B cell (primary cell): ENCODE measurements at regions of chr3 and their contacts with region 1.

Region 1: DNA sequence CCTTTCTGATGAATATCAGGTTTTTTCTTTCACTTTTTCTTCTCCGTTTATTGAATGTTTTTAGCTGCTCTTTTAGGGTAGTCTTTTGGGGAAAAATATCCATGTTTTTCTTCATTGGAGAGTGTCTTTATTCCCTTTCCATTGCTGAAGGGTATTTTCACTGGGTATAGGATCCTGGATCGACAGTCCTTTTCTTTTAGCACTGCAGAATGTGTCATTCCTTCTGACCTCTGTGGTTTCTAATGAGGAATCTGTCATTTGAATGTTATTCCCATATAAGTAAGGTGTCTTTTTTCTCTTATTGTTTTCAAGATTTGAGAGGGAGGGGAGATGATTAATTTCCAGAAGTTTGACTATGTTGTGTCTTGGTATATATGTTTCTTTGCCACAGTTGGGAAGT is 96.8 kb downstream of the BBX start:
- DNase-seq: no peak
- ATAC-seq: no peak
- H3K4me3 ChIP-seq: no peak overlapping the region
- H3K4me3 Mint-ChIP-seq: peak overlapping the region; percentile 15
- H3K27ac ChIP-seq: no peak overlapping the region
- H3K27ac Mint-ChIP-seq: no peak overlapping the region
- H3K4me1 ChIP-seq: peaks cover 0 to 30% of the 10 kb centered on the region in 2 donors
- H3K4me1 Mint-ChIP-seq: peaks cover 71% of the 10 kb centered on the region
- H3K27me3 ChIP-seq: no peaks in the 10 kb centered on the region
- H3K27me3 Mint-ChIP-seq: no peaks in the 10 kb centered on the region
- CTCF ChIP-seq: no peak

Region 2: DNA sequence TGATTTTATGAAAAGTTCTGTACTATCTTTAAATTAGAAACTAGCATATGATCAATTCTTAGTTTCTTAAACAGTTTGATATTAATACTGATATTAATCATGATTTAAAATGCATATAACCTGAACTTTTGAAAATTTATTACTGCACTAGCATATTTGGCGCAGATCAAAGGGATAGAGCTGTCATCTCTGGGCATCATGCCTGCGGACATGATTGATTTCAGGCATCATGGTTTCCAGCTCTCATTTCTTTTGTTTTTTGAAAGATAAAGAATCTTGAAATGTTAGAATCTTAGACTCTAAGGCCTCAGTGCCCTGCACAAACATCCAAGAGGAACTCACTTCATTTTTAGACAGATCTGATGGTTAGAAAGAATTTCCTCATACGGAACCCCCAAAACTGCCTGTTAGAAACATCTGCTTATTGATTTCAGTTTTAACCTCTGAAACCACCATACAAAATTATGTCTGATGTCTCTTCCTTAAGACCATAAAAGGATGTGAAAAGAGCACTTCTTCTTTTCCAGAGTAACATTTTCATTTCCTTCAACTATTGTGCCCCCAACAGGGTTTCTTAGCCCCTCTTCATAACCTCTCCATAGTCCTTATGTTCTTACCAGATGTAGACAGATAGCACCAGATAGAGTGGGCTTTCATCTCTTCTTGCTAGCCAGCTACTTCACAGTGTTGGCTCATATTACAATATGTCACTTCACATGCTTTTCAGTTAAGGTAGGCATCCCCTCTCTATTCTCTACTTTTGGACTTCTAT is 14.0 kb after region 1 on chr3:
- CTCF ChIA-PET with region 1: interaction called, 3 read pairs
- POLR2A ChIA-PET with region 1: no interaction called
- intact Hi-C with region 1: loop called (anchors 2 kb)
- DNase-seq: peak; percentile 47
- ATAC-seq: peak; percentile 33
- H3K4me3 ChIP-seq: peak overlapping the region in 1 of 5 experiments; percentile 38
- H3K4me3 Mint-ChIP-seq: peak overlapping the region; percentile 49
- H3K27ac ChIP-seq: peak overlapping the region in 1 of 2 donors; percentile 55
- H3K27ac Mint-ChIP-seq: peak overlapping the region; percentile 54
- H3K4me1 ChIP-seq: peaks cover 11 to 26% of the 10 kb centered on the region in 2 donors
- H3K4me1 Mint-ChIP-seq: peaks cover 49% of the 10 kb centered on the region
- H3K27me3 ChIP-seq: no peaks in the 10 kb centered on the region
- H3K27me3 Mint-ChIP-seq: no peaks in the 10 kb centered on the region
- CTCF ChIP-seq: no peak